ENCODE measurements at regions of chr19 and their contacts with region 1.

Region 1: DNA sequence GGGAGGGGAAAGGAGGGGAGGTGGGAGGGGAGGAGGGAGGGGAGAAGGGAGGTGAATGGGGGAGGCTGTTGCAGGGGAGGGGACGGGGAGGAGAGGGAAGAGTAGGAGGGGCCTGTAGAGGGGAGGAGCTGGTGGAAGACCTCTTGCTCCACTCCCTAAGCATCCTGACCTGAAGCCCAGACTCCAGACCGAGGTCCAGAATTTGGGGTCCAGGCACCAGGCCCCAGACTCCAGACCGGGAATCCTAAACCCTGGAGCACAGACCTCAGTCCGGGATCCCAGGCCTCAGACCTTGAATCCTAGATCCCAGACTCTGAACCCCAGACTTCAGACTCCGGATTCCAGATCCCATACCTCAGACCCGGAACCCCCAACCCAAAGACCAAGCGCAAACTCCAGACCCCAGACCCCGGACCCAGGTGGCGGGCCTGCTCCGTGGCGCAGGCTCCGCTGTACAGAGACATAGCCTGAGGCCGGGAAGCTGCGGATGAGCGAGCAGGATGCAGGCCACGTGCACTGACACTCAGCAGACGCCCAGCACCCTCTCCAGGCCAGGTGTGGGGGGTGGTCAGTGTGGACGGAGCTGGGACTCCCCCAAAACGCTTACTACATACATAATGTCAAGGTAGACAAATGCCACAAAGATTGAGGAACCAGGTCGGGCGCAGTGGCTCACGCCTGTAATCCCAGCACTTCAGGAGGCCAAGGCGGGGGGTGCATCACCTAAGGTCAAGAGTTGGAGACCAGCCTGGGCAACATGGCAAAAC is 710 bp upstream of the BTBD2 start:
- DNase-seq: peak; percentile 85
- ATAC-seq: peak; percentile 77
- H3K4me3 Mint-ChIP-seq: peak overlapping the region; percentile 66
- H3K27ac Mint-ChIP-seq: peak overlapping the region; percentile 58
- H3K4me1 Mint-ChIP-seq: peaks cover 21% of the 10 kb centered on the region
- H3K27me3 Mint-ChIP-seq: no peaks in the 10 kb centered on the region

Region 2: DNA sequence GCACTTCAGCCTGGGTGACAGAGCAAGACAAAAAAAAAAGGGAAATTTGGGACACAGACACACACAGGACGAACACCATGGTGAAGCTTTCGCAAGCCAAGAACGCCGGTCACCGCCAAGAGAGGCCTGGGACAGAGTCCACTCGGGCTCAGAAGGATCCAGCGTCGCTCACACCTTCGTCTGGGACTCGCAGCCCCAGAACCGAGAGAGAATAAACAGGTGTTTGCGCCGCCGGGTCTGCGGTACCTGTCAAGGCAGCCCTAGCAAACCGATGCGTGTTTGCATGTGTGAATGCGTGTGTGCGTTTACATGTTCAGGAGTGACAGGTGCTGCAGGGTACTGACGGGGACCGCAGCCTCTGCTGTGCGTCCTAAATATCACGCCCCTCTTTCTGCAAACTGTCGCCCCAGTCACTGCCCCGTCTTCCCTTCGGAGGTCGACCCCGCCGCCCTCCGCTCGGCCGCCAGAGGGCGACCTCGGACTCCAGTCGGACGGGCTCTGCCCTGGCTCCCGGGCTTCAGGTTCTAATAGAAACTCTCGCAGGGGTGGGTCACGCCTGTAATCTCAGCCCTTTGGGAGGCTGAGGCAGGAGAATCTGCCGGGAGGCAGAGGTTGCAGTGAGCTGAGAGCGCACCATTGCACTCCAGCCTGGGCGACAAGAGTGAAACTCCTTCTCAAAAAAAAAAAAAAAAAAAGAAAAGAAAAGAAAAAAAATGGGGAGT is 87.0 kb before region 1 on chr19:
- CTCF ChIA-PET with region 1: no interaction called
- POLR2A ChIA-PET with region 1: no interaction called
- intact Hi-C with region 1: loop called (anchors 1 to 5 kb)
- DNase-seq: peak; percentile 90
- ATAC-seq: peak; percentile 87
- H3K4me3 Mint-ChIP-seq: peak overlapping the region; percentile 45
- H3K27ac Mint-ChIP-seq: no peak overlapping the region
- H3K4me1 Mint-ChIP-seq: peaks cover 24% of the 10 kb centered on the region
- H3K27me3 Mint-ChIP-seq: peaks cover 2% of the 10 kb centered on the region

Region 3: DNA sequence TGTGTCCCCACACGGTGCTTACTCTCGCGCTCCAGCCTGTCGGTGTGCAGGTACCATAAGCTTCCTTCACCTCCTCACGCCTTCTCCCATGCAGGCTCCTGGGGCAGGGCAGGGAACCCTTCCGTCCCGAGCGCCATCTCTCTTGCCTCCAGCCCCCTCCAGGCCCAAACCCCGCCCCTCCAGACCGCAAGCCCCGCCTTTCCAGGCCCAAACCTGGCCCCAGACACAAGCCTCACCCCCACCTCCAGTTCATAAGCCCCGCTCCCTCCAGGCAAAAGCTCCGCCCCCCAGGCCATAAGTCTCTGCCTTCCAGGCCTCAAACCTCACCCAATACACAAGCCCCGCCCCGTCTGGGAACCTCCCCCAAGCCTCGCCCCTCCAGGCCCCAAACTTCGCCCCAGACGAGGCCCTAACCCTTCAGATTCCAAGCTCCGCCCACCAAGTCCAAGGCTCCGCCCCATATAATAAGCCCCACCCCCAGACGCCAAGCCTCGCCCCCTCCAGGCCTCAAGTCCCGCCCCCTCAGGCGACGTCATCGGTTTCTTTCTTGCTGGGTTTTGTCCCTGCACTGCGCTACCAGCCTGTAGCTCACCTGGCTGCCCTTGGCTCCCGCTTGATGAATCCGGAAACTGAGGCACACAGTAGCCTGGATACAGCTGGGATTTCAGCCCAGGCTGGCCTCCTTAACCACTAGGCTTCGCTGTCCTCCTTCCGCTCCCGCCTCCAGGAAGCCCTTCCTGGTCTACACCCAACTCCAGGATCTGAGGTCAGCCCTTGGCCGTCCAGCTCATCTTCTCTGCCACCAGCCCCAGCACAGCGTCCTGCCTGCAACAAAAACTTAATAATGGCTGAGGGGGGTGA is 18.7 kb after region 1 on chr19:
- CTCF ChIA-PET with region 1: interaction called, 5 read pairs
- POLR2A ChIA-PET with region 1: no interaction called
- intact Hi-C with region 1: loop called in 1 of 2 experiments (anchors 1 kb)
- DNase-seq: peak; percentile 90
- ATAC-seq: peak; percentile 70
- H3K4me3 Mint-ChIP-seq: no peak overlapping the region
- H3K27ac Mint-ChIP-seq: no peak overlapping the region
- H3K4me1 Mint-ChIP-seq: peaks cover 31% of the 10 kb centered on the region
- H3K27me3 Mint-ChIP-seq: no peaks in the 10 kb centered on the region

Region 4: DNA sequence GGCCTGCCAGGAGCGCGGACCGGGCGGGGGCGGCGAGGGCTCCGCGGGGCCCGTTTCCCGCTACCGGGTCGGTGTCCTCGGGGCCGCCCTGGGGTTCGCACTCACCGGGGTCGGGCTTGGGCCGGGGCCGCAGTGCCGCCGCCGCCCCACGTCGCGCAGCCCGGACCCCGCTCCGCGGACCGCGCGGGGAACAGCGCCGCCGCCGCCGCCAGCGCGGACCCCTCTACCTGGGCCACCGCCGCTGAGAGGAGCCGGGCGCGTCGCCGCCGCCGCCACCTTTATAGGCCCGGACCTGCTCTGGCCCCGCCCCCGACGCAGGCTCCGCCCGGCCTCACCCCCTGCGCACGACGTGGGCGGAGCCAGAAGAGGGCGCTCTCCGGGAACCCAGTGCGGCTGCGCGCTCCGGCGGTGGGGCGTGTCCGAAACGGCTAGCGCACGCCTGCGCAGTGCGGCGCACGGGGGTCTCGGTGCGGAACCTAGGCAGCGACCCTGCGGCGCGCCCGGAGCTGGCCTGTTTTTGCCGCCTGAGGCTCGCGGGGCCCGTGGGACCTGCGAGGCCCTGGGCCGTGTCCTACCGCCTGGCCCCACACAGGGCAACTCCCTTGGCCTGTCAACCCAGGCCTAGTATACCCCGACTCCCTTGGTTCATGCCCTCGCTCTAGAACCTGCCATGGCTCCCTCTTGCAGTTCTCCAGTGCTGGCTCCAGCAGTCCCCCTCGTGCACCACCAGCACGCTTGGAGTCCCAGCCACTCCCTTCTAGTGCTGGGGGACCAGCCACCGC is 35.0 kb after region 1 on chr19 and contains the start of gene MKNK2:
- CTCF ChIA-PET with region 1: no interaction called
- POLR2A ChIA-PET with region 1: no interaction called
- intact Hi-C with region 1: loop called in 1 of 2 experiments (anchors 1 kb)
- DNase-seq: peak; percentile 98
- ATAC-seq: peak; percentile 80
- H3K4me3 Mint-ChIP-seq: peak within 1 kb of the TSS; percentile 82
- H3K27ac Mint-ChIP-seq: peak within 1 kb of the TSS; percentile 94
- H3K4me1 Mint-ChIP-seq: peaks cover 51% of the 10 kb centered on the region
- H3K27me3 Mint-ChIP-seq: no peaks in the 10 kb centered on the region
- total RNA-seq, gene MKNK2: 139 to 155 TPM

Region 5: DNA sequence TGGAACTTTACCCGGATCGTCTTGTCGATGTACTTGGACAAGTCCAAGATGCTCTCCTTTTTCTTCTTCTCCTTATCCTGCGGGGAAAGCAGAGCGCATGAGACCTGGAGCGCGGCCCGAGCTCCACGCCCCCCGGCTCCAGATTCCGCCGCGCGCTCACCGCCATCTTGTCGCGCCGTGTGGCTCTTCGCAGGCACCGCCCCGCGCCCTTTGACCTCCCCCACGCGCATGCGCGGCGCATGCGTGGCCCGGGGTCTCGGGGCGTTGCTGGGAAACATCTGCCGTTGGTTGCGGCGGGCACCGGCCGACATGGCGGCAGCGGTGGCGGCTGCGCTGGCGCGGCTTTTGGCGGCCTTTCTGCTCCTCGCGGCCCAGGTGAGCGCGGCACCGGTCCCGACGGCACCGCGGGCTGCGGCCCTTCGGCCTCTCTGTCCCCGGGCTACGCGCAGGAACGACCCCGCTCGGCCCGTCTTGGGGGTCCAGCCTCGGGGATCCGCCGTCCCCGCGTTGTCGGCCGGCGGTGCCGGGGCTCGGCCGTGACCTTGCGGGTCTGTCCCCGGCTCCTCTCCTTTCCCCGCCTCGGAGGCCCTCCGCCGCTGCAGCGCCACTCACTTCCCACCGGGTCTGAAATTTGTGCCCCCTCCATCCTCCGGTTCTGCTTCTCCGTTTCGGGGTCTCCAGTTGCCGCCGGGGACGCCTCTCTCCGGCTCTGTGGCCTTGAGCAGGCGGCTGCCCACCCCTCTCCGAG is 312.4 kb after region 1 on chr19 and contains the starts of genes LSM7 and SPPL2B:
- CTCF ChIA-PET with region 1: no interaction called
- POLR2A ChIA-PET with region 1: no interaction called
- intact Hi-C with region 1: loop called in 1 of 2 experiments (anchors 5 kb)
- DNase-seq: peak; percentile 95
- ATAC-seq: peak; percentile 78
- H3K4me3 Mint-ChIP-seq: peak within 1 kb of the TSS; percentile 98
- H3K27ac Mint-ChIP-seq: peak within 1 kb of the TSS; percentile 99
- H3K4me1 Mint-ChIP-seq: peaks cover 69% of the 10 kb centered on the region
- H3K27me3 Mint-ChIP-seq: no peaks in the 10 kb centered on the region
- total RNA-seq, gene LSM7: 113 to 134 TPM
- total RNA-seq, gene SPPL2B: 37.7 to 48.5 TPM

Measured in activated CD4-positive, alpha-beta T cell treated with anti-CD3 and anti-CD28 coated beads for 36 hours (primary cell).